Activated CD8-positive, alpha-beta T cell treated with anti-CD3 and anti-CD28 coated beads for 36 hours (primary cell): ENCODE measurements at regions of chr5 and their contacts with region 1.

Region 1: DNA sequence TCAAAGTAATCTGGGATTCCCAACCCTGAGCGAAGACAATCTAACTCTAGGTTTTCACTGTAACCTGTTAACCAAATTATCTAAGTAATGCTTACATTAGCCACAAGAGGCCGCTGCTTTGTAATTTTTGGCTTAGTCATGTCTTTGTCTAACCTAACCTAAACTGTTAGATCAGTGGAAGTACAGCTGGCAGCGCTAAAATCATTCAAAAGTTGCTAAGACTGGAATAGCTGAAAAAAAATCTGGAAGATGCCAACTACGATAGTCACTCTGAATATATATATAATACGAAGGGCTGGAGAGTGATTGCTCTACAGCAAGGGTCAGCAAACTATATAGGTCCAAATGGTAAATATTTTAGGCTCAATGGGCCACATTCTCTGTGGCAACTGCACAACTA is 60.2 kb downstream of the FBXO38 start:
- DNase-seq: peak; percentile 52
- ATAC-seq: peak; percentile 88
- H3K4me3 Mint-ChIP-seq: no peak overlapping the region
- H3K27ac Mint-ChIP-seq: no peak overlapping the region
- H3K4me1 Mint-ChIP-seq: peaks cover 2% of the 10 kb centered on the region
- H3K27me3 Mint-ChIP-seq: no peaks in the 10 kb centered on the region
- CTCF ChIP-seq: peak; percentile 75

Region 2: GRCh38 chr5:148482691-148483462 is 38.9 kb after region 1 on chr5:
- CTCF ChIA-PET with region 1: interaction called, 15 read pairs
- POLR2A ChIA-PET with region 1: no interaction called
- intact Hi-C with region 1: no loop called
- DNase-seq: peak; percentile 71
- ATAC-seq: peak; percentile 92
- H3K4me3 Mint-ChIP-seq: peak overlapping the region; percentile 32
- H3K27ac Mint-ChIP-seq: no peak overlapping the region
- H3K4me1 Mint-ChIP-seq: no peaks in the 10 kb centered on the region
- H3K27me3 Mint-ChIP-seq: peaks cover 24% of the 10 kb centered on the region
- CTCF ChIP-seq: peak; percentile 77

Region 3: DNA sequence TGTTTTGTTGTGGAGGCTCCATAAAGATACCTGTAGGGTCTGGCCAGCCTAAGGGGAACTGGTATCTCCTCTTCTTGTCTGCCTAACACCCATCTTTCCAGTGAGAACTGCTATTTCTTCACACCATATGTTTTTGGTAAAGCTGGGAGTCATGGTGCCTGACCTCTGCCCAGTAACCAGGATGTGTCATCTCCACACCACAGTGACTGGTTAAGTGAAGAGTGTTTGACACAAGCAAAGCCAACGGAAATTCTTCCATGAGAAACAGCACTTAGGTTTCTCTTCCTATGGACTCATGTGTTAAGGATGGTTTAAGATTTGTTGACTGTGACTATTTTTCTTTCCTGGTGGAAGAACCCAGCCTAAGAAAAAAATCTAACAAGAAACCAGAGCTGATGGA is 98.8 kb after region 1 on chr5:
- CTCF ChIA-PET with region 1: no interaction called
- POLR2A ChIA-PET with region 1: no interaction called
- intact Hi-C with region 1: no loop called
- DNase-seq: no peak
- ATAC-seq: no peak
- H3K4me3 Mint-ChIP-seq: no peak overlapping the region
- H3K27ac Mint-ChIP-seq: no peak overlapping the region
- H3K4me1 Mint-ChIP-seq: no peaks in the 10 kb centered on the region
- H3K27me3 Mint-ChIP-seq: peaks cover 3% of the 10 kb centered on the region
- CTCF ChIP-seq: no peak

Region 4: GRCh38 chr5:148666353-148666752 is 222.4 kb after region 1 on chr5:
- CTCF ChIA-PET with region 1: no interaction called
- POLR2A ChIA-PET with region 1: no interaction called
- intact Hi-C with region 1: no loop called
- DNase-seq: no peak
- ATAC-seq: no peak
- H3K4me3 Mint-ChIP-seq: no peak overlapping the region
- H3K27ac Mint-ChIP-seq: no peak overlapping the region
- H3K4me1 Mint-ChIP-seq: no peaks in the 10 kb centered on the region
- H3K27me3 Mint-ChIP-seq: no peaks in the 10 kb centered on the region
- CTCF ChIP-seq: no peak